A549 (cell line): ENCODE measurements at regions of chr1 and their contacts with region 1.

Region 1: GRCh38 chr1:225467193-225468020 is 39.6 kb upstream of the LBR start:
- DNase-seq: no peak
- ATAC-seq: no peak
- H3K4me3 ChIP-seq: no peak overlapping the region
- H3K27ac ChIP-seq: no peak overlapping the region
- H3K4me1 ChIP-seq: peaks cover 15% of the 10 kb centered on the region; the same call in 2 of the 3 replicates
- CTCF ChIP-seq: no peak
- EP300 ChIP-seq: no peak
- POLR2A ChIP-seq: no peak
- RAD21 ChIP-seq: no peak

Region 2: DNA sequence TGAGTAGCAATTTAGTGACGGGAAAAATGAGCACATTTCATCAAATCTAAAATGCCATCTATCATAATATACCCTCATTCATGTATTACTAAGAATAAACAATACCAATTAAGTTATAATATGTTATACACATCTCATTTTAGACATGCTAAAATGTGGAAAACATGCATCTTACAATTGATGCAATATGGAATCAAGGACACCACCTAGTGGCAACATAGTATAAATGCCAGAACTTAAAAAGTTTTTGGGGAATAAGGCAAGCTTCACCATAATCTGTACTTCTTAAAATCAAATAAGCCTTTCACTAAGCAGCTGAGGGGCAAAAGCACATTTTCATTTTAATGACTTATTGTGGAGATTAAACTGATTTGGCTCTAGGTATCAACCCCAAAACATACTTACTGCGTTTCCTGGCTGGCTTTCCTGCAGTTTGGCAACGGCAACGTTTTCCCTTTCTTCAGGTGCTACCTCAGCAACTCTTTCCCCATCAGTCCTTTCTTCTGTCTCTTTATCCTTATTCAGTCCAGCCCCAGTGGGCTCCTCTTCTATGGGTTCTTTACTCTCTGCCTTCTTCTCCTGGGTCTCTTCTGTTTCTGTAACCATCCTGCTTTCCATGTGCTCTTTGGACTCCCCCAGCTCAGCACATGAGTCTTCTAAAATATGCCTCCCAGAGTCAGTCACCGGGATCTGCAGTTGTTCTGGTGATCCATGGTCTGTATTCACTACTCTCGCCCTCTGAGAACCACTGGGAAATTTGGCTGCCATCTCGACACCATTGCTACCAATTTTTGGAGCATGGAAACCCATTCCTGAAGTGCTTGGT is 520.3 kb after region 1 on chr1:
- CTCF ChIA-PET with region 1: interaction called, 14 read pairs
- POLR2A ChIA-PET with region 1: no interaction called
- DNase-seq: peak; percentile 42 to 58
- ATAC-seq: peak; percentile 56 to 72; a peak in 4 of 6 replicates
- H3K4me3 ChIP-seq: no peak overlapping the region
- H3K27ac ChIP-seq: no peak overlapping the region
- H3K4me1 ChIP-seq: no peaks in the 10 kb centered on the region
- CTCF ChIP-seq: peak; percentile 77
- EP300 ChIP-seq: no peak
- POLR2A ChIP-seq: no peak
- RAD21 ChIP-seq: peak; percentile 46 to 50; a peak in 4 of 5 replicates